GM23248 (cell line): ENCODE measurements at regions of chr14 and their contacts with region 1.

Region 1: DNA sequence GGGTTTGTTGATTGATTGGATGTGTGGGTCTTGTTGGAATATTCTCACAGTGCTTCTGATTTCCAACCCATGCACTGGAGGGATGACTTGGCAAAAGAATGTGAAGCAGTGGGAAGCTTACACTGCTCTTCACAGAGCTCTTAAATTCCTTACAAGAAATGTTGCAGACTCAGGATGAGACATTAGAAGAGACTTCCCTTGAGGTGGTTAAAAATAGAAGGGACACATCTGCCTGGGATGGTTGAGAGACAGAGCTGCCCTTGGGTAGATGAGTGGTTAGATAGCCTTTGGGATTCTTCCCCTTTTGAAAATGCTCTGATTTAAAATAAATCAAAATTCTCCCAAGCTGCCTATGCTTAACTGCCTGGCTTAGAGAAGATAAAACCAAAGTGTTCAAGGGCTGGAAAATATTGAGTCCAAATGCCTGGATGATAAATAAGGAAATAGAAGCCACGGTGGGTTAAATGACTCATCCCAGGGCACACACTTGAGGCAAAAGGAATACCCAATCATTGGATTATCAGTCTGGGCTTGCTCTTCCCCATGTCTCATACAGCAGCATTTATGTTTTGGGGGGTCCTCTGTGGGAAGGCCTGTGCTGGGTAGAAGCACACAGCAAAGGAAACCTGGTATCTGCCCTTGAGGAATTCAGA is 264.3 kb downstream of the AKAP6 start:
- DNase-seq: peak; percentile 90
- H3K4me3 ChIP-seq: no peak overlapping the region; the same call in 1 of the 2 replicates
- H3K27ac ChIP-seq: peak overlapping the region; percentile 87
- H3K4me1 ChIP-seq: peaks cover 55% of the 10 kb centered on the region
- H3K27me3 ChIP-seq: no peaks in the 10 kb centered on the region

Region 2: GRCh38 chr14:31678421-31679249 is 914.8 kb before region 1 on chr14:
- in situ Hi-C with region 1: no loop called
- DNase-seq: no peak
- H3K4me3 ChIP-seq: no peak overlapping the region
- H3K27ac ChIP-seq: no peak overlapping the region
- H3K4me1 ChIP-seq: no peaks in the 10 kb centered on the region
- H3K27me3 ChIP-seq: no peaks in the 10 kb centered on the region

Region 3: GRCh38 chr14:32710731-32711680 is 117.6 kb after region 1 on chr14:
- in situ Hi-C with region 1: loop called (anchors 10 kb)
- DNase-seq: peak; percentile 68
- H3K4me3 ChIP-seq: peak overlapping the region; percentile 54
- H3K27ac ChIP-seq: peak overlapping the region; percentile 76
- H3K4me1 ChIP-seq: peaks cover 27% of the 10 kb centered on the region
- H3K27me3 ChIP-seq: no peaks in the 10 kb centered on the region